Activated T-helper 1 cell treated with anti-CD3 and anti-CD28 coated beads, Interleukin-12 subunit alpha, Interleukin-12 subunit beta, Interleukin-2, Interleukin-4 antibody, amounts not matched to agents 30 ng/mL and 10 ng/mL and 1 ng/mL, durations not matched to agents 14 hours and 24 hours and 36 hours (primary cell): ENCODE measurements at regions of chr2 and their contacts with region 1.

Region 1: DNA sequence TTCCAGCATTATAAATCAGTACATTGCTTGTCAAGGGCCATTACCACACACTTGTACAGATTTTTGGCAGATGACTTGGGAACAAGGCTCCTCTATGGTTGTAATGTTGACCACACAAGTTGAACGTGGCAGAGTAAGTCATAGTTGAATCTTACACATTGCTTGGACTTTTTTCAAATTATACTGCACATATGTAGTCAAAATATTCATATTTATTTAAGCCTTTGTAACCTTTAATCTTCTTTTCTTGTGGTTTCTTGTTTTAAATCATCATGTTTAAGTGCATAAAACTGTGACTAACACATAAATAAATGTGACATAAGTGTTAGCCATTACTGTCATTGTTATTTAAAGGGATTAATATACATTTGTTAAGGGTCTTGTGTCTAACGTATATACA is 52.1 kb upstream of the EPB41L5 start:
- DNase-seq: no peak
- H3K4me3 Mint-ChIP-seq: no peak overlapping the region
- H3K27ac Mint-ChIP-seq: no peak overlapping the region
- H3K4me1 Mint-ChIP-seq: no peaks in the 10 kb centered on the region
- H3K27me3 Mint-ChIP-seq: no peaks in the 10 kb centered on the region

Region 2: DNA sequence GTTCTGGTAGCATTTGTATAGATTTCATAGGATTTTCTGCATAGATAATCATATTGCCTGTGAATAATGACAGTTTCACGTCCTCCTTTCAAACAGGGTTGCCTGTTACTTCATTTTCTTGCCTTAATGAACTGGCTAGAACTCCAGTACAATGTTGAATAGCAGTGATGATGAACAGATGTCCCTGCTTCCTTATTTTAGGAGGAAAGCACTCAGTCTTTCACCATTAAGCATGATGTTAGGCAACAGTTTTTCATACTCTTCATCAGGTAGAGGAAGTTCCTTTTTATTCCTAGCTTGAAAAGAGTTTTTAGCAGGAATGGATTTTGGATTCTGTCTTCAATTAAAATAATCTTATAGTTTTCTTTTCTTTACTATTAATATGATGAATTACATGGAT is 633.9 kb before region 1 on chr2:
- intact Hi-C with region 1: no loop called
- DNase-seq: no peak
- H3K4me3 Mint-ChIP-seq: no peak overlapping the region
- H3K27ac Mint-ChIP-seq: no peak overlapping the region
- H3K4me1 Mint-ChIP-seq: no peaks in the 10 kb centered on the region
- H3K27me3 Mint-ChIP-seq: peaks cover 2% of the 10 kb centered on the region

Region 3: DNA sequence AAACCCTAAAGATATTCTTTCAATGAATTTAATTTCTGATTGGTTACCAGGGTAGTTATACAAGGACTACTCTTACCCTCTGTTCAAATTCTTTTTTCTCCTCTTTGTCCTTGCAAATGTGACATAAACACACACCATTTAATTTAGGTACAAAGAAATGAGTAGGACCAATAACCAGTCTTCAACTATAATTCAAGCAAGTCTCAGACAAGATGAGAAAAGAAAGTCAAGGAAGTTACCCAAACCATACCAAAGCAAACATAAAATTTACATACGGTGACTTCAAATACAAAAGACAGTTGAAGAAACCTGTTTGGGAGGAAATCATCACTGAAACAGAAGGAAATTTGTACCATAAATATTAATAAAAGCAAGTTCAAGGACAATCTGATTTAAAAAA is 39.0 kb before region 1 on chr2:
- intact Hi-C with region 1: loop called (anchors 2 kb)
- DNase-seq: no peak
- H3K4me3 Mint-ChIP-seq: no peak overlapping the region
- H3K27ac Mint-ChIP-seq: no peak overlapping the region
- H3K4me1 Mint-ChIP-seq: peaks cover 9% of the 10 kb centered on the region
- H3K27me3 Mint-ChIP-seq: no peaks in the 10 kb centered on the region